Activated CD8-positive, alpha-beta T cell treated with anti-CD3 and anti-CD28 coated beads for 36 hours (primary cell): ENCODE measurements at regions of chr17 and their contacts with region 1.

Region 1: DNA sequence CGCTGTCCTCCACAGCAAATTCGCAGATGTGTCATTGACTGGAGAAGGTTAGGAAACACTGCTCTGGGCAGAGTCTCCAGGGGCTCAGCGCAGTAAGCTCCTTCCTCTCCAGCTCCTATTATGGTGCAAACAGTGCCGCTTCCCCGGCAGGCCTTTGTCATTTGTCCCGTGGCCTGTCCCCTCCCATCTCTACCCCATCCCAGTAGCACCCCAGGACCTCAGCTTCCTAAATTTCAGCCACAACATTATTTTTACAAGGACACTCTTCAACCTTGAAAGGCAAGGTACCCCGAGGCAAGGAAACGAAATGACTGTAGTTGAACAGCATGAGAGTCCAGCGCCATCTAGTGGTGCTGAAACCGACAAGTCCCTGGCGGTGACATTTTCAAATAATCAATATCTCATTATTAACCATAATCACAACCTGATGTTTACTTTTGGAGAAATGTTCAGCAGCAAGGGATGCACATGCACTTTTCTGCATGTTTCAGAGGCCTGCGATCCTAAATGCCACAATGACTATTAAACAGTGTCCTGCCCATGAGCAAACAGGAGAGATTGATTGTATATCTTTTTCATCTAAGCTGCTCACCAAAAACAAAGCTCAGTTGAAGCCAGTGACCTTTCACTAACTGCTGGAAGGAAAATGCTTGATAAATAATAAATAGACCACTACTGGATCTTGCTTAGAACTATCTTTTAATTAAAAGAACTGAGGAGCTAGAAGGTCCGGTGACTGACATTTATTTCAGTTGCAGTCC is 16.5 kb downstream of the MRPS23 start:
- DNase-seq: peak; percentile 84
- ATAC-seq: peak; percentile 75
- H3K4me3 Mint-ChIP-seq: no peak overlapping the region
- H3K27ac Mint-ChIP-seq: no peak overlapping the region
- H3K4me1 Mint-ChIP-seq: peaks cover 8% of the 10 kb centered on the region
- H3K27me3 Mint-ChIP-seq: no peaks in the 10 kb centered on the region
- CTCF ChIP-seq: peak; percentile 92

Region 2: DNA sequence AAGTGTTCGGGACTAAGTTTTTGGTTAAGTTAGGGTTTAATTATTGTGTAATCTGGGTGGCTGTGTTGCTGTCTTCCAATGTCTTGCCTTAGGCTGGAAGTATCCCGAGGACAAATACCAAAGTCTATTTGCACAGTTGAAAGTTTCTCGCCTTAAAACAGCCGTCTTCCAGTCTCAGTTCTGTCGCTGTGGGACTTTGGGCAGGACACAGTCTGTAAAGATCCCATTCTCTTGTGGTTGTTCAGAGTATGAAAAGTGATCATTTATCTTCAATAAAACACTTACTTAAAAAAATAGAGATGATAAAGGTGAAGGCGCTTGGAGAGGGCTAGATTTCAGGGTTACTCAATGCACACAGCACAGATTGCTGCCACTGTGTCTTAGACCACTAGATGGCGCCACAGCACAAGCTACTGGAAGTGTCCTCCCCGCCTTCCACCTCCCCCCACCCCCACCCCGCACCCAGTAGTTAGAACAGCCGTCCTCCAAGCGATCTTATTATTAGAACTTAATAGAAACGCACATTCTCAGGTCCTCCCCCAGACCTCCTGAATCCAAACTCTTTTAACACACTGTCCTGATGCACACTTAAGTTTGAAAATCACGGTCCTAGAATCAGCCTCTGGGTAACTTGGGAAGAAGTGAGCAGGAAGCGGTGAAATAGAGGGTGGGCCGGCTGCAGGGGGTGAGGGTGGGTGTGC is 702.4 kb before region 1 on chr17:
- CTCF ChIA-PET with region 1: interaction called, 10 read pairs
- POLR2A ChIA-PET with region 1: no interaction called
- intact Hi-C with region 1: loop called (anchors 5 kb)
- DNase-seq: peak; percentile 90
- ATAC-seq: peak; percentile 91
- H3K4me3 Mint-ChIP-seq: no peak overlapping the region
- H3K27ac Mint-ChIP-seq: no peak overlapping the region
- H3K4me1 Mint-ChIP-seq: peaks cover 6% of the 10 kb centered on the region
- H3K27me3 Mint-ChIP-seq: no peaks in the 10 kb centered on the region
- CTCF ChIP-seq: peak; percentile 87

Region 3: DNA sequence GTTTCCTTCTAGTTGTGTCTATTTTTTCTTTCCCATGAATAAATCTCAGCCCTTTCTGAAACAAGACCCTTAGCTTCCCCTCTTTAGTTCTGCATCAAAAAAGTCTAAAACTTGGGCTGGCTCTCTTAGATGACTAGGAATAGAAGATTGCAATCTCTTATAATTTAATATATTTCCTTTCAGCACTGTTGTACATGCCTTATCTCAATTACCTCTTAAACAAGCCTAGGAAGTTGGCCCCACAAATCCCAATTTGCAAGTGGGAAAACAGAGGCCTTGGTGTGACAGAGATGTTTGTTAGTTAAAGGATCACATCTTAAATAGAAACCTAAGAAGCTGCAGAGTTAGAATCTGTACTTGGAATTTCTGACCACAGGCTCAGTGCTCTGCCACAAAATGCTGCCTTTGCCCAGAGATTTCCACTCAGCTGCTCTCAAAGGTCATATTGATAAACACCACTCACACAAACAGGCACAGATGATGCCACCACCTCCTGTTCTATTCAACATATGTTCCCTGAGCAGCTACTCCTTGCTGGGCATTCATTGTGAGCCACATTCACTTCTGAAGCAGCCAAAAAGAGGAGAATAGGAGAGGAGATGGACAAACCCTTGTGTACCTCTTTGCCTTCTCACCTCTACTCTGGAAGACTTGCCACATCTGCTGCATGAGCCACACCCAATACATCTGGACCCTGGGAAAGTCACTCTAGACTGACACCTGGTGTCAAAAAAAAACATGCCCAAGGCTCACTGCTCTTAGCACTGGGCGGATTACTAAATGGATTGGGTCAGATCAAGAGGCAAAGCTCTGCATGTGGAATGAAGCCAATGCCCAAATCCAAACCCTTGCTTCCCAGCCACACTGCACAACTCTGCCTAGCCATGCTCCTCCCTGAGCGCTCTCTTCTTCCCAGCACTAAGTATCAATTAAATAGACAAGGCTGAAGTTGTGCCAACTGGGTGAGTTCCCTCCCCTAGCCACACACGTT is 93.7 kb before region 1 on chr17:
- CTCF ChIA-PET with region 1: interaction called, 10 read pairs
- POLR2A ChIA-PET with region 1: no interaction called
- intact Hi-C with region 1: no loop called
- DNase-seq: peak; percentile 18
- ATAC-seq: peak; percentile 79
- H3K4me3 Mint-ChIP-seq: no peak overlapping the region
- H3K27ac Mint-ChIP-seq: no peak overlapping the region
- H3K4me1 Mint-ChIP-seq: peaks cover 5% of the 10 kb centered on the region
- H3K27me3 Mint-ChIP-seq: no peaks in the 10 kb centered on the region
- CTCF ChIP-seq: peak; percentile 58

Region 4: GRCh38 chr17:57810721-57811637 is 22.4 kb before region 1 on chr17:
- CTCF ChIA-PET with region 1: interaction called, 15 read pairs
- POLR2A ChIA-PET with region 1: no interaction called
- intact Hi-C with region 1: no loop called
- DNase-seq: no peak
- ATAC-seq: no peak
- H3K4me3 Mint-ChIP-seq: no peak overlapping the region
- H3K27ac Mint-ChIP-seq: no peak overlapping the region
- H3K4me1 Mint-ChIP-seq: peaks cover 12% of the 10 kb centered on the region
- H3K27me3 Mint-ChIP-seq: peaks cover 36% of the 10 kb centered on the region
- CTCF ChIP-seq: no peak

Region 5: GRCh38 chr17:57849874-57850754 is 16.8 kb after region 1 on chr17 and contains the start of gene MRPS23:
- CTCF ChIA-PET with region 1: interaction called, 49 read pairs
- POLR2A ChIA-PET with region 1: interaction called, 9 read pairs
- intact Hi-C with region 1: no loop called
- DNase-seq: peak; percentile 98
- ATAC-seq: peak; percentile 97
- H3K4me3 Mint-ChIP-seq: peak within 1 kb of the TSS; percentile 91
- H3K27ac Mint-ChIP-seq: peak within 1 kb of the TSS; percentile 95
- H3K4me1 Mint-ChIP-seq: peaks cover 30% of the 10 kb centered on the region
- H3K27me3 Mint-ChIP-seq: no peaks in the 10 kb centered on the region
- CTCF ChIP-seq: no peak
- total RNA-seq, gene MRPS23: 69.5 to 70.0 TPM

Region 6: DNA sequence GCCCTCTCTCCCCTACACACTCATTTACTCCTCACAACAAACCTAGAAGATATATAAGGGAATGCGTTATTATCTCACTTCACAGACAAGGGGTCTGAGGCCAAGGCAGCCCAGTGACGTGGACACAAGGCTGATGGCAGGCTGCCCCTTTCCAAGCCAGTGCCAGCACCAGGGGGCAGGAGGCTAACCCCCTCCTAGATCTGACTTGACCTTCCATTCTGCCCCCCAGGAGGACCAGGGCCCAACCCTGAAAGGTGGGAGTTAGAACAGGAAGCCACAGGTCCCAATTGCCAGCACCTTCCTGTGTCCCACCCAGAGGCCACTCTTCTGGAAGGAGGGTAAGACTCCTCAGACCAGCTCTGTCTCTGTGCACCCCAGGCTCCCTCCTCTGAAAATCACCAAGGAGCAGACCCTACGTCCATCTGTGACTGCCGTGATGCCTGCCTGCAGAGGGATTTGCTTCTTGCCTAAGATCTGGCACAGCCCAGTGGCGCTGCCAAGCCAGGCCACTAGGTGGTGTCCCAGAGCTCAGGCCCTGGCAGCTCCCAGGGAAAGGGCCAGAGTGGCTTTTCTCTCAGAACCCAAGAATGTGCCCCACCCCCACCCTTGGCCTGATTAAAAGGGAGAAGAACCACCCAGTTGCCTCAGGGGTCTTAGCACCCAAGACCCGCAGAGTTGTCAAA is 58.9 kb after region 1 on chr17:
- CTCF ChIA-PET with region 1: interaction called, 10 read pairs
- POLR2A ChIA-PET with region 1: no interaction called
- intact Hi-C with region 1: no loop called
- DNase-seq: peak; percentile 88
- ATAC-seq: peak; percentile 99
- H3K4me3 Mint-ChIP-seq: no peak overlapping the region
- H3K27ac Mint-ChIP-seq: no peak overlapping the region
- H3K4me1 Mint-ChIP-seq: no peaks in the 10 kb centered on the region
- H3K27me3 Mint-ChIP-seq: peaks cover 2% of the 10 kb centered on the region
- CTCF ChIP-seq: peak; percentile 87

Region 7: GRCh38 chr17:57916925-57917858 is 83.8 kb after region 1 on chr17:
- CTCF ChIA-PET with region 1: no interaction called
- POLR2A ChIA-PET with region 1: no interaction called
- intact Hi-C with region 1: no loop called
- DNase-seq: peak; percentile 48
- ATAC-seq: peak; percentile 66
- H3K4me3 Mint-ChIP-seq: no peak overlapping the region
- H3K27ac Mint-ChIP-seq: no peak overlapping the region
- H3K4me1 Mint-ChIP-seq: no peaks in the 10 kb centered on the region
- H3K27me3 Mint-ChIP-seq: no peaks in the 10 kb centered on the region
- CTCF ChIP-seq: no peak